ENCODE measurements at regions of chr4 and their contacts with region 1.

Region 1: DNA sequence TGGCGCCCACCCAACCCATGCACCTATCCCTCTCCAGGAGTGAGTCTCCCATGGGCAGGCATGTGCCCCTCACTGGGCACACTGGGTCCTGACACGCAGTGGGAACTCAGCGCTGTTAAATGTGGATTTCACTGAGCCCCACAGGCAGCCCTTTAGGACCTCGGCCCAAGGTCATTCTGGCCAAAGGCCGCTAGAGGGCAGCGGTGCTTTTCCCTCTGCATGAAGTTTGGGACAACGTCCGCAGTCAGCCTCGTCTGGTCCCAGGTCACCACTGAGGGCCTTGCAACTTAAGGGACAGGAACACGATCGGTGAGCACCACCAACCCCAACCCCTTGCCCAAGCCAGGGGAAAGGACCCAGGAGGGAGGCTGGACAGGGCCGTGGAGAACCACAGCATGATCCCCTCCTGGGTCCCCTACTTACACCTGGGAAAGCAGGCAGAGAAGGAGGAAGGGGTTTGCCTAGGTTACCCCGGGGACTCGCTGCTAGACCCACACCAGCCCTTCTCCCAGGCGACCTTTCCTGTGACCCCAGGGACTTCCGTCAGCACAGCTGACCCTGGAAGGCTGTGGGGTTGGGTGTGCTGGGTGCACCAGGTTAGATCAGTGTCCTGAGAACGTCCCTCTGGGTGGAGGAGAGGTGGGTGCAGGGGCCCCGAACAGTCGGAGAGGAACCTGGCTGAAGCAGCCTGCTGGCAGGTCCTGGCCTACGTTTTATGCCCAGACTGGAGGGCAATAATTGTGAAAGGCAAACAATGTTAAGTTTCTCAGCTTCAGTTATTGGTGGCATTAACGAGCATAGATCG is 24.0 kb downstream of the CYTL1 start:
- DNase-seq: peak; percentile 74
- ATAC-seq: peak; percentile 80
- H3K4me3 Mint-ChIP-seq: no peak overlapping the region
- H3K27ac Mint-ChIP-seq: no peak overlapping the region
- H3K4me1 Mint-ChIP-seq: no peaks in the 10 kb centered on the region
- H3K27me3 Mint-ChIP-seq: peaks cover 13% of the 10 kb centered on the region

Region 2: GRCh38 chr4:5142726-5143125 is 147.4 kb after region 1 on chr4:
- CTCF ChIA-PET with region 1: no interaction called
- POLR2A ChIA-PET with region 1: no interaction called
- intact Hi-C with region 1: loop called (anchors 1 to 10 kb)
- DNase-seq: peak; percentile 11
- ATAC-seq: no peak
- H3K4me3 Mint-ChIP-seq: no peak overlapping the region
- H3K27ac Mint-ChIP-seq: no peak overlapping the region
- H3K4me1 Mint-ChIP-seq: no peaks in the 10 kb centered on the region
- H3K27me3 Mint-ChIP-seq: peaks cover 1% of the 10 kb centered on the region

Region 3: GRCh38 chr4:5460116-5460801 is 465.0 kb after region 1 on chr4:
- CTCF ChIA-PET with region 1: no interaction called
- POLR2A ChIA-PET with region 1: no interaction called
- intact Hi-C with region 1: loop called in 1 of 2 experiments (anchors 1 kb)
- DNase-seq: peak; percentile 35
- ATAC-seq: no peak
- H3K4me3 Mint-ChIP-seq: no peak overlapping the region
- H3K27ac Mint-ChIP-seq: no peak overlapping the region
- H3K4me1 Mint-ChIP-seq: no peaks in the 10 kb centered on the region
- H3K27me3 Mint-ChIP-seq: no peaks in the 10 kb centered on the region

Region 4: DNA sequence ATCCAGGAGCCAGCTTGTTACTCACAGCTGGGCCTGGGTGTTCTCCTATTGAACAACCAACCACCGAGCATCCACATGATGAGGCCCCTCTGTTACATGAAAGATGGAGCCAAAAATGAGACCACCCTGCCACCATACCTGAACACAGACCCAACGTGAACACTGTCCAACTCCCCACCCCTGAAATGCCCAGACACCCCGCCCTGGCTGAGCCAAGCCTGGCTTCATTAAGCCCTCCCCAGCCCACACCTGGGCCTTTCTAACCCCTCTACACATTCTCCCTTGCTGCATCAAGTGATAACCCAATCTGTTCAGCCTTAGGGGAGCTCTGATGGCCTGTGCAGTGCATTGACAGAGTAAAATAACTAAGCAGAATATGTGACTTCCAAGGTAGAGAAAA is 796.3 kb after region 1 on chr4:
- CTCF ChIA-PET with region 1: interaction called, 3 read pairs
- POLR2A ChIA-PET with region 1: no interaction called
- intact Hi-C with region 1: loop called (anchors 1 kb)
- DNase-seq: no peak
- ATAC-seq: no peak
- H3K4me3 Mint-ChIP-seq: no peak overlapping the region
- H3K27ac Mint-ChIP-seq: no peak overlapping the region
- H3K4me1 Mint-ChIP-seq: no peaks in the 10 kb centered on the region
- H3K27me3 Mint-ChIP-seq: peaks cover 2% of the 10 kb centered on the region

Region 5: GRCh38 chr4:5812506-5813229 is 817.4 kb after region 1 on chr4:
- CTCF ChIA-PET with region 1: no interaction called
- POLR2A ChIA-PET with region 1: no interaction called
- intact Hi-C with region 1: loop called (anchors 1 to 10 kb)
- DNase-seq: peak; percentile 35
- ATAC-seq: peak; percentile 49
- H3K4me3 Mint-ChIP-seq: no peak overlapping the region
- H3K27ac Mint-ChIP-seq: no peak overlapping the region
- H3K4me1 Mint-ChIP-seq: no peaks in the 10 kb centered on the region
- H3K27me3 Mint-ChIP-seq: peaks cover 3% of the 10 kb centered on the region